ENCODE measurements at regions of chr17 and their contacts with region 1.

Region 1: GRCh38 chr17:32150358-32150757 is 8.1 kb downstream of the RHOT1 start:
- DNase-seq: no peak
- H3K4me3 ChIP-seq: no peak overlapping the region
- H3K27ac ChIP-seq: no peak overlapping the region
- H3K4me1 ChIP-seq: peaks cover 0 to 22% (median 2%) of the 10 kb centered on the region in 4 experiments
- H3K27me3 ChIP-seq: no peaks in the 10 kb centered on the region

Region 2: GRCh38 chr17:31052187-31052889 is 1098.0 kb before region 1 on chr17:
- CTCF ChIA-PET with region 1: no interaction called
- POLR2A ChIA-PET with region 1: interaction called, 10 read pairs
- DNase-seq: peak; percentile 63 to 94 (median 91)
- H3K4me3 ChIP-seq: no peak overlapping the region
- H3K27ac ChIP-seq: no peak overlapping the region
- H3K4me1 ChIP-seq: peaks cover 2 to 19% (median 15%) of the 10 kb centered on the region in 4 experiments
- H3K27me3 ChIP-seq: no peaks in the 10 kb centered on the region

Region 3: DNA sequence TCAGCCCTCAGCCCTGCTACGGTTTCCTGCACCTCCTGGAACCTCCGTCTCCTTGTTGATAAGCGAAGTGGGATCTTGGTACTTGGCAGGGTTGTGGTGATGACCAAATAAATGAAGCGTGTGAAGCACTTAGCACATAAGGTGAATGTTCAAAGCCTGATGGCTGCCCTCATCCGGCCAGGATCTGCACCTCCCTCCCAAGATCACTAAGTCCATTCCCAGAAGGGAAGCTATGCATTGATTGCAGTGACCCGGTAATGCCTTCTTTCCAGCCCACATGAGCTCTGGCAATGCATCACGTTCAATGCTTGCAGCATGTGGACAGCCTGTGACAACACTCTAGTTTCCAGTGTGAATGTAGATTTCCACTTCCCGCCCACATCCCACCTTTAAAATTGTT is 33.0 kb before region 1 on chr17:
- CTCF ChIA-PET with region 1: no interaction called
- POLR2A ChIA-PET with region 1: no interaction called
- DNase-seq: no peak
- H3K4me3 ChIP-seq: no peak overlapping the region
- H3K27ac ChIP-seq: no peak overlapping the region
- H3K4me1 ChIP-seq: peaks cover 2 to 16% (median 10%) of the 10 kb centered on the region in 4 experiments
- H3K27me3 ChIP-seq: no peaks in the 10 kb centered on the region